Activated CD4-positive, alpha-beta memory T cell treated with anti-CD3 and anti-CD28 coated beads for 36 hours (primary cell): ENCODE measurements at regions of chr9 and their contacts with region 1.

Region 1: DNA sequence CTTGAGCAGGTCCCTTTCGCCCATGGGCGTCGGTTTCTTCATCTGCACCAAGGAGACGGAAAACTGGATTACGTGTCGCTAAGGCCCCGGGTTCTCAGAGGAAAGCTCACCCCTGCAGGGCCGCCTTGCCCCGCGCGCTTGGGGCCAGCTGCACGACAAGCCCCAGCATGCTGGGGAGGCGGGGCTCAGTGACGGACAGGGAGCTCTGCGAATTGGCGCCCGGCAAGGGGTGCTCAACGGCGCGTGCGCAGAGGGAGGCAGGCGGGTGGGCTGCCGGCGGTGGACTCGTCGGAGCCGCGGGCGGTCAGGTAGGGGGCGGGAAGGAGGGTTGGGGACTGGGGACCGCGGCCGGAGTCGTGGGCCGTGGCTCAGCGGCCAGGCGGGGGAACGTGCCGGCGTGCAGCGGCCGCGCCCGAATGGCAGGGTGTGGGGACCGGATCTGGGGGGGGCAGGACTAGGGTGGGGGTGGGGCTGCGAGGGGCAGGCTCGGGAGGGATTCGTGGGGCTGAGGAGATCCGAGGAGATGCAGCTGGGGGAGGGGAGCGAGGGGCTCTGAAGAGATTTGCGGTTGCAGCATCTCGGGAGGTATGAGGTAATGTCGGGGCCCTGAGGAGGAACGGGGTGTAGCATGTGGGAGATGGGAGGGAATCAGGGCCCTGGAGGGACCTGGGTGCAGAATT is at the start of gene TRIM32:
- DNase-seq: peak; percentile 94
- H3K4me3 Mint-ChIP-seq: peak within 1 kb of the TSS; percentile 83
- H3K27ac Mint-ChIP-seq: peak within 1 kb of the TSS; percentile 77
- H3K4me1 Mint-ChIP-seq: peaks cover 55% of the 10 kb centered on the region
- H3K27me3 Mint-ChIP-seq: no peaks in the 10 kb centered on the region
- total RNA-seq, gene TRIM32: 13.3 to 14.3 TPM

Region 2: GRCh38 chr9:116549061-116549664 is 138.1 kb before region 1 on chr9:
- CTCF ChIA-PET with region 1: no interaction called
- POLR2A ChIA-PET with region 1: no interaction called
- intact Hi-C with region 1: no loop called
- DNase-seq: peak; percentile 11
- H3K4me3 Mint-ChIP-seq: no peak overlapping the region
- H3K27ac Mint-ChIP-seq: no peak overlapping the region
- H3K4me1 Mint-ChIP-seq: peaks cover 5% of the 10 kb centered on the region
- H3K27me3 Mint-ChIP-seq: no peaks in the 10 kb centered on the region

Region 3: GRCh38 chr9:116700882-116701865 is 14.0 kb after region 1 on chr9:
- CTCF ChIA-PET with region 1: interaction called, 3 read pairs
- POLR2A ChIA-PET with region 1: interaction called, 4 read pairs
- intact Hi-C with region 1: loop called (anchors 1 kb)
- DNase-seq: no peak
- H3K4me3 Mint-ChIP-seq: no peak overlapping the region
- H3K27ac Mint-ChIP-seq: peak overlapping the region; percentile 40
- H3K4me1 Mint-ChIP-seq: peaks cover 30% of the 10 kb centered on the region
- H3K27me3 Mint-ChIP-seq: no peaks in the 10 kb centered on the region